MCF 10A (cell line): ENCODE measurements at regions of chr20 and their contacts with region 1.

Region 1: GRCh38 chr20:4740774-4741431 is 19.2 kb downstream of the PRND start:
- DNase-seq: peak; percentile 53
- H3K4me3 Mint-ChIP-seq: no peak overlapping the region
- H3K27ac Mint-ChIP-seq: no peak overlapping the region
- H3K4me1 Mint-ChIP-seq: no peaks in the 10 kb centered on the region
- H3K27me3 Mint-ChIP-seq: peaks cover 13% of the 10 kb centered on the region
- CTCF ChIP-seq: peak; percentile 62

Region 2: DNA sequence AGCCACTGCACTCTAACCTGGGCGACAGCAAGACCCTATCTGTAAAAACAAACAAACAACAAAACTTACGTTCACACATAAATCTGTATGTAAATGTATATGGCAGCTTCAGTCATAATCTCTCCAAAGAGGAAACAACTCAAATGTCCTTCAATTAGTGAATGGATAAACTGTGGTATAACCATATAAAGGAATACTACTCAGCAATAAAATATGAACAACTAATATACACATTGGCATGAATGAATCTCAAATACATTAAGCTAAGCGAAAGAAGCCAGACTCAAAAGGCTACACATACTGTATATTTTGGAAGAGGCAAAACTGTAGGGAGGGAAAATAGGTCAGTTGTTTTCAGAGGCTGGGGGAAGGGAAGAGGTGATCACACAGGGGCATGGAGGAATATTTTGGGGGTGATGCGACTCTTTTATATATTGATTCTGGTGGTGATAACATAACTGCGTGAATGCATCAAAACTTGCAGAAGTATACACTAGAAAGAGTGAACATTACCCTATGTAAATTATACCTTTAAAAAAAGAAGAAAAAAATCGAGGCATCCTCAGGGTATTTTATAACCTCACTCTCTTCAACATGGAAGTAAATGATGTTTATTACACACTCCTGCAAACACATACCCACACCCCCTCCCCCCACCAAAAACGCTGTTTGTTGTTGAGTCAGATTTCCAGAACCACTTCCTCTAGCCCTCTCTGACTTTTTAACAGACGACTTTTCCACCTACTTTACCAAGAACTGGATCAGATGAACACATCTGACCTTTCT is 610.3 kb before region 1 on chr20:
- CTCF ChIA-PET with region 1: no interaction called
- POLR2A ChIA-PET with region 1: no interaction called
- intact Hi-C with region 1: no loop called
- DNase-seq: peak; percentile 83
- H3K4me3 Mint-ChIP-seq: no peak overlapping the region
- H3K27ac Mint-ChIP-seq: peak overlapping the region; percentile 12
- H3K4me1 Mint-ChIP-seq: peaks cover 36% of the 10 kb centered on the region
- H3K27me3 Mint-ChIP-seq: no peaks in the 10 kb centered on the region
- CTCF ChIP-seq: no peak

Region 3: DNA sequence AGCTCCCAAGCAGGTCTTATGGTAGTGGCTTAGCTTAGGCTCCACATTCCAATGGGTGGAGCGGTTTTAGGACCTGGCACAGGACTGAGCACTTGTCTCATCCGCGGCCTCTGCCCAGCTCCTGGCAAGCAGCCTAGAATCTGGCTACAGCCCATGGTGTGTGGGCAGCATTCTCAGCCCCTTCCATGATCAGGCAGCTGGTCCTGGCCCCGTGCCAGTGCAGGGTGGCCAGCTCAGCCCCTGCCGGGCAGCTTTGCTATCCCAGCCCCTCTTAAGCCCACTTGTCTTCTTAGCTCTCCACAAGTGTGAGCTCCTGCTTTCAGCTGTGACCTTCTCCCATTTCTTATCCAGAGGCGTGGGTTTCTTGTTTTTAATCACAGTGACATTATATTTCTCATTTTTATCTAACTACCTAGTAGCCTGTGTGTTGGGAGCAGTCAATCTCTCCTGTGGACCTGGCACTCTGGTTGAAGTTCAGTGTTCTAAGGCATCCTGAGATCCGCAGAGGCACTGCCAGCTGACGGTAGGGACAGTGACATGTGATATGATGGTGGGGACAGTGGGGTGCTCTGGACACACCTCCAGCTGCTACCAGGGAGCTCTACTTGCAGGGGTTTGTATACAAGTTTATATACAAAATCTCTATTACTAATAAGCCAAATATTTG is 139.1 kb before region 1 on chr20:
- CTCF ChIA-PET with region 1: interaction called, 11 read pairs
- POLR2A ChIA-PET with region 1: no interaction called
- intact Hi-C with region 1: no loop called
- DNase-seq: peak; percentile 91
- H3K4me3 Mint-ChIP-seq: no peak overlapping the region
- H3K27ac Mint-ChIP-seq: no peak overlapping the region
- H3K4me1 Mint-ChIP-seq: peaks cover 21% of the 10 kb centered on the region
- H3K27me3 Mint-ChIP-seq: no peaks in the 10 kb centered on the region
- CTCF ChIP-seq: no peak

Region 4: GRCh38 chr20:4726710-4727397 is 14.0 kb before region 1 on chr20:
- CTCF ChIA-PET with region 1: interaction called, 34 read pairs
- POLR2A ChIA-PET with region 1: interaction called, 9 read pairs
- intact Hi-C with region 1: no loop called
- DNase-seq: peak; percentile 38
- H3K4me3 Mint-ChIP-seq: no peak overlapping the region
- H3K27ac Mint-ChIP-seq: no peak overlapping the region
- H3K4me1 Mint-ChIP-seq: no peaks in the 10 kb centered on the region
- H3K27me3 Mint-ChIP-seq: peaks cover 2% of the 10 kb centered on the region
- CTCF ChIP-seq: no peak

Region 5: DNA sequence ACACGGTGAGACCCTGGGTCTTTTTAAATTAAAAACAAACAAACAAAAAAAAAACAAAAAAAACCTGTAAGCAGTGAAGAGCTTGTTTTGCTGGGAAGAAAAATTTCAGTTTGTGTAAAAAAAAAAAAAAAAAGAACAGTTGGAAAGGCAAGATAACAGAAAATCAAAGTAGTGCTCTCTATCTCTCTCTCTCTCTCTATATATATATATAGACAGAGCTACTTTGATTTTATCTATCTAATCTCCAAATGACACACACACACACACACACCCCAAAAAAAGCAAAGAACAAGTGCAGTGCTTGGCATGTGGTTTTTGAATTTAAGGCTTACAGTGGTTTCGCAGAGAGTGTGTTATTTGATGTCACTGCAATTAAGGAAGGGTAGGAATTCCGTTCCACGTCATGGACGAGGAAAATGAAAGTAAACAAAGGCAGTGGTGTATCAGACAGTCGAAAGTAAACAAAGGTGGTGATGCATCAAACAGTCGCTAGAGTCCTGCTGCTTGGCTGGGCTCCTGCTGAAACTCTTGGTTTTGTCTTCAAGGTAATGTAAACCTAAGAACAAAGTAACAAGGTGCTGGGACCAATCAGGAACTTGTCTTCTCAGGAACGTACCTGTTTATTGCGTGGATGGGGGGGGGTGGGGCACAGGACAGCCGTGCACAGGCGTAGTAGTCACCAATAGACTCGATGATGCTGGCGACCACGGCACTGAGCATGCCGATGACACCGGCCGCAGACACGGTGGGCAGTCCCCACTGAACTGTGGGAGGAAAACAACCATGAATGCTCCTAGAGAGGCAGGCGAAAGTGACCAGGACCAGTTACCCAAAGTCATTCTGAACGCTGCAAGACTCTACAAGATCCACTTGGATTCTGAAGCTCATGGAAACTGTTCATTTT is 128.6 kb after region 1 on chr20:
- CTCF ChIA-PET with region 1: no interaction called
- POLR2A ChIA-PET with region 1: no interaction called
- intact Hi-C with region 1: no loop called
- DNase-seq: no peak
- H3K4me3 Mint-ChIP-seq: no peak overlapping the region
- H3K27ac Mint-ChIP-seq: no peak overlapping the region
- H3K4me1 Mint-ChIP-seq: peaks cover 4% of the 10 kb centered on the region
- H3K27me3 Mint-ChIP-seq: no peaks in the 10 kb centered on the region
- CTCF ChIP-seq: no peak

Region 6: GRCh38 chr20:4949833-4950178 is 208.9 kb after region 1 on chr20:
- CTCF ChIA-PET with region 1: interaction called, 6 read pairs
- POLR2A ChIA-PET with region 1: no interaction called
- intact Hi-C with region 1: loop called (anchors 5 kb)
- DNase-seq: peak; percentile 42
- H3K4me3 Mint-ChIP-seq: no peak overlapping the region
- H3K27ac Mint-ChIP-seq: peak overlapping the region; percentile 64
- H3K4me1 Mint-ChIP-seq: peaks cover 21% of the 10 kb centered on the region
- H3K27me3 Mint-ChIP-seq: no peaks in the 10 kb centered on the region
- CTCF ChIP-seq: peak; percentile 48